AG04449 (cell line): ENCODE measurements at regions of chr3 and their contacts with region 1.

Region 1: DNA sequence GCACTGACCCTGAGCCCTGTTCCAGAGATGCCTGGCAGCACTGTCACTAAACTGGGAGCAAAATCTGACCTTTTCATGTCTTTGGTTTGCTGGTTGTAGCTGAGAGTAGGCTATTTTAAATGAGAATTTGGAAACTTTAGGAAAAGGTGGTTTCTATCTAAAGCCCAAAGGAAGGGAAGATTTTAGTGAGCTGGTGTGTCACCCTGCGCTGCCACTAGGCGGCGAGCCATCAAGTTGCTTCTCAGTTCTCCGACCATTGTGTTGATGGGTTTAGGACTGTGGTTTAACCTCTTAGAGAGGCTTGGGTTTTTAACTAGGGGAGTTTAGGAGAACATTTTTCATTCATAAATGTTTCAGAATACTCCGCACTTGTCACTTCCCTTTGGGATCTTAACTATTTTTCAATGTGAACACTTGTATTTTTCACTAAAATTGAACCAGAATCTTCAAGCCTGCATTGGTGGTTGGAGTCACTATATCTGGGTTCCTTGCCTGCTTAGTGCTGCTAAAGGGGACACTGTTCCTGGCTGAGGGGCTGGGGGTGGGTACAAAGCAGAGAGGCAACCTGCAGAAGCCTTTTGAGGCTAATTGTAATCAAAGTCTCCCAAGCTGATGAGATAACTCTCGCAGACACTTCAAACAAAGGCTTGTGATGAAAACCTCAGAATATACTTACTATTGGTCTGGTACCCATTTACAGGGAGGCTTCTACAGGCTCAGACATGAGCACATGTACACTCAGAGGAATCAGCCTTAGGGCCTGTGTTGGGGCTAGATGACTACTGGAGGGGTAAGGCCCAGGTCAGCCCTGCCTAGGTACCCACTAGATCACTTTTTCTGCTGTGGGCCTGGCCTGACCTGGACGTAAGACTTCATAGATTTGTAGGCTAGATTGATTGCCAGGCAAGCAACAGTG is 16.8 kb downstream of the EXOSC7 start:
- DNase-seq: no peak
- H3K4me3 ChIP-seq: no peak overlapping the region
- CTCF ChIP-seq: peak; percentile 51

Region 2: GRCh38 chr3:44624749-44625480 is 367.9 kb before region 1 on chr3 and contains the start of gene ZNF197:
- CTCF ChIA-PET with region 1: no interaction called
- POLR2A ChIA-PET with region 1: no interaction called
- DNase-seq: no peak
- H3K4me3 ChIP-seq: peak within 1 kb of the TSS; percentile 83
- CTCF ChIP-seq: peak; percentile 24

Region 3: DNA sequence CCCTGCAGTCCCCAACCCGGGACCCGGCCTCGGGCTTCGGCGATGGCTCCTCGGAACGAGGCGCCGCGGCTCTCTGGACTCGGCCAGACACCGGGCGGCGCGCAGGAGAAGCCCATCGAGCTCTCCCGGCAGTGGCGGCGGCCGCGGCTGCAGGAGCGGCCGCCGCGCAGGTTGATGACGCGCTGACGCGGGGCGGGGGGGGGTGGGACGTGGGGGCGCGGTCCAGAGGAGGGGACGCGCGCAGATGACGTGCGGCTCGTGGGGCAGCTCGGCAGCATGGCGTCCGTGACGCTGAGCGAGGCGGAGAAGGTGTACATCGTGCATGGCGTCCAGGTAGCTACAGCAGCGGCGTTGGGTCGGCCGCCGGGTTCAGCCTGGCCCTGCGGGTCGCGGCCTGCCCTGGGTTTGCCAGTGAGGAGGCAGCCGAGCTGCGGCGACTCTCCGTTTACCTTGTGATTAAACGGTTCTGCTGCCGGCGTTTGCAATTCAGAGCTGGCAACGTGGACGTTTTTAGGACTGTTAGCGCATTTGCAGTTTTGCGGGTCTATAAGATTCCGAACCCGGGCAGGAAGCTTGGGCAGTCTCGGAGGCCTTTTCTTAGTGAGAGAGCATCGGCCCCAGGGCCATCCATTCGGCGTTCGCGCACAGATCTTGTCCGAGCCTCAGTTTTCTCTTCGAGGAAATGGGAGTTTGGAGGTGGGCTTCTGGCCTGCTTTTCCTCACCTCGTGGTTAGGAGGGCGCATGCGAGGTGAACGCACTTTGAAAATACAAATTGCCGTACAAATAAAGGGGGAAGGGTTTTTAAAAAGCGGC is 16.6 kb before region 1 on chr3 and contains the starts of genes EXOSC7 and ZDHHC3:
- CTCF ChIA-PET with region 1: interaction called, 24 read pairs
- POLR2A ChIA-PET with region 1: no interaction called
- DNase-seq: no peak
- H3K4me3 ChIP-seq: peak within 1 kb of the TSS; percentile 96
- CTCF ChIP-seq: no peak

Region 4: DNA sequence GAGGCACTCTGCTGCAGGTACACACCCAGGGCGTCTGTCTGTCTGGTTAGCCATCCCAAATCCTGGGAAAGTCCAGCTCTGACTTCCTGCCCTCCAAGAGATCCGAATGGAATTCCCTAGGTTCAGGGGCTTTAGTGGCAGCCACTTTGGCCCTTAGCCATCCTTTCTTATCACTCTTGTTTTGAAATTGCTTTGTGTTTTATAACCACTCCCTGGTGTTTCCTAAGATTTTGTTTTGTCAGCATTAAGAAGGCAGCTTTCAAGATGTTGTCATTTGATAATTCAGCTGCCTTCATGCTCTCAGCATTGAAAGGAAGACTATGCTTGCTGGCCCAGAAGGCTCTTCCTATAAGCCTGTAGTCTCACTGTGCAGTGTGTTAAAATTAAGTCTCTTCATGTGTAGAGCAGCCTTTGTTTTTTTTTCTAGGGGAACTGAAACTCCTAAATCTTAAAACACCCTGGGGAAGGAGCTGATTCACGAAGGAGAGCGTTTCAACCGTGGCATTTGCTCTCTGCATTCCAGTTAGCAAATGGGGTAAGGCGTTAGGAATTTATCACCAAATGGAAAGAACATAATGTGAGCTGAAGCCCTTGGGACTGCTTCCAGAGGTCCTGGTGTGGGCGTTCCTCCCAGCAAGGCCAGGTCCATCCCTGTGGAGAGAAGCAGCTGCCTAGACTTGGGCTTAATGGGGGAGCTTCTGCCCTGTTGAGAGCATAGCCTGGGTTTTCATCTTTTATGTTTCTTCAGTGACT is 19.1 kb after region 1 on chr3:
- CTCF ChIA-PET with region 1: interaction called, 17 read pairs
- POLR2A ChIA-PET with region 1: interaction called, 3 read pairs
- DNase-seq: peak; percentile 79
- H3K4me3 ChIP-seq: peak overlapping the region; percentile 34
- CTCF ChIP-seq: no peak